Heart right ventricle (tissue), 16 donors: ENCODE measurements at regions of chr7 and their contacts with region 1.

Region 1: DNA sequence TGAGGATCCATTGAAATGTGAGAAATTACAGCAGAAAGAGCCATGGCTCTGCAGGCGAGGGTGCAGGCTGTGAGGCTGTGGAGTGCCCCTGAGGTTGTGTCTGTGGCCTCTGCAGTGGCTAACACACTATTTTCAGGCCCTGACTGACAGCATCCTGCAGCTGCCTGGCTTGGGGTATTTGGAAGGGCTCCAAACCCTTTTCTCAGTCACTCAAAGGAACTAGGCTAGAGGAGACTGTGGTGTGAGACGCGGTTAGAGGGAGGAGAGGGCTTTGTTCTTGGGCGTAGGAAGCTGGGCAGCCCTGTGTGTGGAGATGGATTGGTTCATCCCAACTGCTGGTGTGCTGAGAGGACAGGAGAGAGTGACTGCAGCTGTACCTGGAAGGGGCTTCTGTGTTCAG is 134.9 kb downstream of the RAMP3 start:
- DNase-seq: peak; percentile 12 to 28
- ATAC-seq: peak; percentile 45 to 79 (median 66)
- H3K4me3 ChIP-seq: no peak overlapping the region
- H3K27ac ChIP-seq: peak overlapping the region in 6 of 10 donors; percentile 28 to 60 (median 52)
- H3K4me1 ChIP-seq: peaks cover 9 to 34% (median 19%) of the 10 kb centered on the region in 9 donors
- H3K27me3 ChIP-seq: no peaks in the 10 kb centered on the region
- CTCF ChIP-seq: no peak

Region 2: GRCh38 chr7:44565097-44565794 is 727.2 kb before region 1 on chr7:
- intact Hi-C with region 1: no loop called
- DNase-seq: peak; percentile 44 to 72
- ATAC-seq: peak; percentile 74 to 92 (median 88)
- H3K4me3 ChIP-seq: no peak overlapping the region
- H3K27ac ChIP-seq: peak overlapping the region in 5 of 10 donors; percentile 1 to 53 (median 15)
- H3K4me1 ChIP-seq: peaks cover 0 to 14% (median 0%) of the 10 kb centered on the region in 9 donors
- H3K27me3 ChIP-seq: no peaks in the 10 kb centered on the region
- CTCF ChIP-seq: peak; percentile 91 to 100 (median 97)

Region 3: GRCh38 chr7:45224832-45225231 is 67.6 kb before region 1 on chr7:
- intact Hi-C with region 1: no loop called
- DNase-seq: no peak
- ATAC-seq: peak in 2 of 8 donors; percentile 21
- H3K4me3 ChIP-seq: no peak overlapping the region
- H3K27ac ChIP-seq: no peak overlapping the region
- H3K4me1 ChIP-seq: peaks cover 0 to 21% (median 15%) of the 10 kb centered on the region in 9 donors
- H3K27me3 ChIP-seq: peaks cover 0 to 4% (median 0%) of the 10 kb centered on the region in 7 donors
- CTCF ChIP-seq: no peak

Region 4: GRCh38 chr7:45367026-45367425 is 74.5 kb after region 1 on chr7:
- intact Hi-C with region 1: loop called in 1 of 10 experiments (anchors 5 kb)
- DNase-seq: no peak
- ATAC-seq: no peak
- H3K4me3 ChIP-seq: no peak overlapping the region
- H3K27ac ChIP-seq: no peak overlapping the region
- H3K4me1 ChIP-seq: no peaks in the 10 kb centered on the region
- H3K27me3 ChIP-seq: no peaks in the 10 kb centered on the region
- CTCF ChIP-seq: no peak

Region 5: GRCh38 chr7:47179812-47180515 is 1887.5 kb after region 1 on chr7:
- intact Hi-C with region 1: no loop called
- DNase-seq: peak in 1 of 2 donors; percentile 56
- ATAC-seq: peak; percentile 44 to 74 (median 61)
- H3K4me3 ChIP-seq: no peak overlapping the region
- H3K27ac ChIP-seq: no peak overlapping the region
- H3K4me1 ChIP-seq: peaks cover 7 to 51% (median 29%) of the 10 kb centered on the region in 9 donors
- H3K27me3 ChIP-seq: no peaks in the 10 kb centered on the region
- CTCF ChIP-seq: peak; percentile 55 to 91 (median 82)